Activated CD4-positive, alpha-beta T cell treated with anti-CD3 and anti-CD28 coated beads, Interleukin-2, amount 10 ng/mL, durations not matched to agents 7 days and 5 days (primary cell): ENCODE measurements at regions of chr2 and their contacts with region 1.

Region 1: DNA sequence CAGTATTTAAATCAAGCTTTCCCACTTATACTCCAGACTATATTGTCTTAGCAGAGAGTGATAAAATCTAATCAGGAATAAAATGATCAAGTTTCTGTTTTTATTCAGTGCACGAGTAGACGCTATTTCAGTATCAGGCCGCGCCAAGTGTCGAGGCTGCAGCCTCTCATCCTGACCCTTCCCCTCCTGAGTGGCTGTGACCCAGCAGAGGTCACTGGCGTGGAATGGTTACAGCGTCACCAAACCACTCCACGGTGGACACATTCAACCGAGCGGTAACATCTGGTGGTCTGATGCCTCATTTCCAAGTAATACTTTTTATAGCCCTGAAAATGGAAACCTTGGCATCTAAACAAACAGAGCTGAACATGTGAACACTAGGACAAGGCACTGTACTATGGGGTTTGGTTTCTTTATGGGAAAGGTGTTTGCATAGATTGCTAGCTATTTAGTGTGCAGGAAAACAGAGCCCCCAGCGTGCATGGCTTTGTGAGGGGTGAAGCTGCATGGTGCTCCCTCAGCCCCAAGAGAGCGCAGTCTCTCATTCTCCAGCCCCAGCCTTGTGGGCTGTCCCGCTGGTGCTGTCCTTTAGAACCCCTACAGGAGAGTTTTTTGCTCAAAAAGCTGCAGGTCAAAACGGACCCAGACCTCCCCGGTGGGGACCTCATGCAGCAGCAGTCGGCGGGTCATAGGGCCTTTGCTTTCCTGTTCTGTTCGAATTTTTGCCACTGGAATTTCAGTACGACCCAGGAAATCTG is 28.4 kb downstream of the FAM228A start:
- DNase-seq: no peak
- H3K4me3 Mint-ChIP-seq: no peak overlapping the region
- H3K27ac Mint-ChIP-seq: no peak overlapping the region
- H3K4me1 Mint-ChIP-seq: no peaks in the 10 kb centered on the region
- H3K27me3 Mint-ChIP-seq: no peaks in the 10 kb centered on the region

Region 2: GRCh38 chr2:24179683-24180082 is 23.5 kb before region 1 on chr2:
- CTCF ChIA-PET with region 1: interaction called, 10 read pairs
- POLR2A ChIA-PET with region 1: no interaction called
- DNase-seq: no peak
- H3K4me3 Mint-ChIP-seq: no peak overlapping the region
- H3K27ac Mint-ChIP-seq: no peak overlapping the region
- H3K4me1 Mint-ChIP-seq: peaks cover 9% of the 10 kb centered on the region
- H3K27me3 Mint-ChIP-seq: peaks cover 2% of the 10 kb centered on the region

Region 3: DNA sequence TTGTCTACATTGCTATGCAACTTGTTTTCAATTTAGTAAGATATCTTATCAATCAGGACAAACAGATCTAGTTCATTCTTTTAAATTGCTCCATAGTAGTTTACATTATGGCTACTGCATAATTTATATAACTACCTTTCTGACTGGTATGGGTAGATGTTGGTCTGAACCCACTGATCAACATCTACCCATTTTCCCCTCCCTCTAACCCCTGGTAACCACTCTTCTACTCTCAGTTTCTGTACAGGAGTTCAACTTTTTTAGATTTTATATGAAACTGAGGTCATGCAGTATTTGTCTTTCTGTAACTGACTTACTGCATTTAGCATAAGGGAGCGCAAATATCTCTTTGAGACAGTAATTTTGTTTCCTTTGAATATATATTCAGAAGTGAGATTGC is 84.0 kb after region 1 on chr2:
- CTCF ChIA-PET with region 1: no interaction called
- POLR2A ChIA-PET with region 1: no interaction called
- DNase-seq: no peak
- H3K4me3 Mint-ChIP-seq: no peak overlapping the region
- H3K27ac Mint-ChIP-seq: no peak overlapping the region
- H3K4me1 Mint-ChIP-seq: peaks cover 8% of the 10 kb centered on the region
- H3K27me3 Mint-ChIP-seq: no peaks in the 10 kb centered on the region

Region 4: GRCh38 chr2:25145803-25146202 is 942.6 kb after region 1 on chr2:
- CTCF ChIA-PET with region 1: no interaction called
- POLR2A ChIA-PET with region 1: no interaction called
- DNase-seq: no peak
- H3K4me3 Mint-ChIP-seq: no peak overlapping the region
- H3K27ac Mint-ChIP-seq: no peak overlapping the region
- H3K4me1 Mint-ChIP-seq: peaks cover 4% of the 10 kb centered on the region
- H3K27me3 Mint-ChIP-seq: peaks cover 5% of the 10 kb centered on the region